Thyroid gland (tissue), 4 donors: ENCODE measurements at regions of chr11 and their contacts with region 1.

Region 1: GRCh38 chr11:88543902-88544655 is 206.5 kb upstream of the CTSC start:
- DNase-seq: peak; percentile 68 to 81
- H3K4me3 ChIP-seq: no peak overlapping the region
- H3K27ac ChIP-seq: no peak overlapping the region
- H3K4me1 ChIP-seq: peaks cover 3 to 4% of the 10 kb centered on the region in 2 donors
- H3K27me3 ChIP-seq: no peaks in the 10 kb centered on the region
- CTCF ChIP-seq: peak; percentile 59 to 97 (median 88)
- POLR2A ChIP-seq: no peak

Region 2: DNA sequence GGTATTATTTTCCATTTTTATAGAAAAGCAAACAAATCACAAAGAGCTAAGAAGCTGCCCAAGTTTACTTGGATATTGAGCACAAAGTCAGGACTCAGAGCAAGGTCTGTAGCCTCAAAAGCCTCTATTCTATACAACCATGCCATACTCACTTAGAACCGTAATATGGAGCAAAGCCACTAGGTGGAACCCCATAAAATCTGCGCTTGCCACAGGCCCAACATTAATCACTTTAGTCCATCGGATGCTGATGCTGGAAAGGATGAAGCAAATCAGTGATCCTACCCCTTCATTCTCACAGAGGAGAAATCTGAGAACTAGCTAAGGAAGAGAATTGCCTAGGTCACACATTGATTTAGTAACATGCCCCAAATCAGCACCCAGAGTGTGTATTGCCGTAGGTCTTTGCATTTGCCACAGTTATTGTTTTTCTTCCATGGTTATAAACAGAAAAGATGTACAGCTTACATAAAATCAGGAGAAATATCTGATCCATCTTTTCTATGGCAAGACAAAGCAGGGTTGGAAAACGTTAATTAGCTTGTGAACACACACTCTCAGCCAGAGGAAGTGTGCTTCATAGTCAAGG is 312.1 kb before region 1 on chr11:
- intact Hi-C with region 1: loop called (anchors 5 kb)
- DNase-seq: no peak
- H3K4me3 ChIP-seq: no peak overlapping the region
- H3K27ac ChIP-seq: no peak overlapping the region
- H3K4me1 ChIP-seq: no peaks in the 10 kb centered on the region
- H3K27me3 ChIP-seq: no peaks in the 10 kb centered on the region
- CTCF ChIP-seq: peak in 5 of 6 experiments; percentile 36 to 61 (median 55)
- POLR2A ChIP-seq: no peak

Region 3: DNA sequence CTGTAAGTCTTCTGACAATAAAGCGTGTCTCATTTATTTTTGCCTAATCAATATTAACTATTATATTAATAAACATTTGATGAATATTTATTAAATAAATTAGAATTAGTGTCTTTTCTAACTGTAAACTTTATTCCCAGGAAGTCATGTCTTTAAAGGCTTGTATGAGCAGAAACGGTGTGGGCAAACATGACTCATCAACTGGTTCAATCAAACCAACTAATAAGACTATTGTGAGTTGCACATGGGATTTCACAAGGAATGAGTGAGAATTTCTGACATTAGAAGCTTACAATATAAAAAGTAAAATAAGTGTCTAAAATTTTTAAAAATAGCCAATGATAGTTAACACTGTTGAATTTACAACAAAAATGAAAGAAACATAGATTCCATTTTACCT is 52.7 kb after region 1 on chr11:
- intact Hi-C with region 1: no loop called
- DNase-seq: no peak
- H3K4me3 ChIP-seq: no peak overlapping the region
- H3K27ac ChIP-seq: no peak overlapping the region
- H3K4me1 ChIP-seq: no peaks in the 10 kb centered on the region
- H3K27me3 ChIP-seq: no peaks in the 10 kb centered on the region
- CTCF ChIP-seq: no peak
- POLR2A ChIP-seq: no peak

Region 4: GRCh38 chr11:88657076-88657738 is 113.1 kb after region 1 on chr11:
- intact Hi-C with region 1: no loop called
- DNase-seq: no peak
- H3K4me3 ChIP-seq: no peak overlapping the region
- H3K27ac ChIP-seq: no peak overlapping the region
- H3K4me1 ChIP-seq: no peaks in the 10 kb centered on the region
- H3K27me3 ChIP-seq: no peaks in the 10 kb centered on the region
- CTCF ChIP-seq: no peak
- POLR2A ChIP-seq: no peak